Esophagus squamous epithelium (tissue), 5 donors: ENCODE measurements at regions of chr13 and their contacts with region 1.

Region 1: GRCh38 chr13:110819203-110820014 is 95.5 kb downstream of the ANKRD10 start:
- DNase-seq: no peak
- H3K4me3 ChIP-seq: no peak overlapping the region
- H3K27ac ChIP-seq: no peak overlapping the region
- H3K4me1 ChIP-seq: peaks cover 0 to 6% (median 0%) of the 10 kb centered on the region in 3 donors
- H3K27me3 ChIP-seq: no peaks in the 10 kb centered on the region
- CTCF ChIP-seq: peak; percentile 77 to 97 (median 96)
- POLR2A ChIP-seq: no peak

Region 2: GRCh38 chr13:110593430-110594130 is 225.8 kb before region 1 on chr13:
- intact Hi-C with region 1: loop called (anchors 5 kb)
- DNase-seq: no peak
- H3K4me3 ChIP-seq: no peak overlapping the region
- H3K27ac ChIP-seq: no peak overlapping the region
- H3K4me1 ChIP-seq: peaks cover 0 to 25% (median 3%) of the 10 kb centered on the region in 3 donors
- H3K27me3 ChIP-seq: no peaks in the 10 kb centered on the region
- CTCF ChIP-seq: peak; percentile 34 to 71 (median 62)
- POLR2A ChIP-seq: no peak

Region 3: GRCh38 chr13:111262715-111263114 is 443.3 kb after region 1 on chr13:
- intact Hi-C with region 1: no loop called
- DNase-seq: no peak
- H3K4me3 ChIP-seq: no peak overlapping the region
- H3K27ac ChIP-seq: no peak overlapping the region
- H3K4me1 ChIP-seq: no peaks in the 10 kb centered on the region
- H3K27me3 ChIP-seq: no peaks in the 10 kb centered on the region
- CTCF ChIP-seq: no peak
- POLR2A ChIP-seq: no peak